GM13976 (cell line): ENCODE measurements at regions of chr2 and their contacts with region 1.

Region 1: GRCh38 chr2:238370823-238371372 is 50.6 kb downstream of the TRAF3IP1 start:
- DNase-seq: peak; percentile 71
- CTCF ChIP-seq: peak; percentile 73

Region 2: DNA sequence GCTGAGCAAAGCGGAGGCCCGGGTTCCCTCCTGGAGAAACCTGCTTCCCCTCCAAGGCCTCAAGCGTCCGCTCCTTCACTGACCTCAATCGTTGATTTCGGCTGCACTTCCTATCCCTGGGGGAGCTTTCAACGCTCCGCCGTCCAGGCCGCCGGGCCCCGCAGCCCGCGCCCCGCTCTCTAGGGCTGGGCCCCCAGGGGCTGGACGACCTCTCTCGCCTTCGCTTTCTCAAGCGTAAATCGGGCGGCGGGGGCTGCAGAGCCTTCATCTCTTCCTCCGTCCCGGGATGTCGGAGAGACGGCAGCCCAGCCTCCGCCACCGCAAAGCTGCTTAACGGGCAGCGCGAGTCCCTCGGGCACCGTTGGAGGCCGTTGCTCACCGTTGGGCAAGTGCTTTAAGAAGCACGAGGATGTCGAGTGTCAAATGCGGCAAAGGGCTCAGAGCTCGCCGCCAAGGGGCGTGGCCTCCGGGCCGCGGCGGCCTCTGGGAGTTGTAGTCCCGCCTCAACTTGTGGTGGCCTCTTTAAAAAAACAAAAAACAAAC is 139.6 kb before region 1 on chr2:
- in situ Hi-C with region 1: no loop called
- DNase-seq: peak; percentile 84
- CTCF ChIP-seq: no peak

Region 3: DNA sequence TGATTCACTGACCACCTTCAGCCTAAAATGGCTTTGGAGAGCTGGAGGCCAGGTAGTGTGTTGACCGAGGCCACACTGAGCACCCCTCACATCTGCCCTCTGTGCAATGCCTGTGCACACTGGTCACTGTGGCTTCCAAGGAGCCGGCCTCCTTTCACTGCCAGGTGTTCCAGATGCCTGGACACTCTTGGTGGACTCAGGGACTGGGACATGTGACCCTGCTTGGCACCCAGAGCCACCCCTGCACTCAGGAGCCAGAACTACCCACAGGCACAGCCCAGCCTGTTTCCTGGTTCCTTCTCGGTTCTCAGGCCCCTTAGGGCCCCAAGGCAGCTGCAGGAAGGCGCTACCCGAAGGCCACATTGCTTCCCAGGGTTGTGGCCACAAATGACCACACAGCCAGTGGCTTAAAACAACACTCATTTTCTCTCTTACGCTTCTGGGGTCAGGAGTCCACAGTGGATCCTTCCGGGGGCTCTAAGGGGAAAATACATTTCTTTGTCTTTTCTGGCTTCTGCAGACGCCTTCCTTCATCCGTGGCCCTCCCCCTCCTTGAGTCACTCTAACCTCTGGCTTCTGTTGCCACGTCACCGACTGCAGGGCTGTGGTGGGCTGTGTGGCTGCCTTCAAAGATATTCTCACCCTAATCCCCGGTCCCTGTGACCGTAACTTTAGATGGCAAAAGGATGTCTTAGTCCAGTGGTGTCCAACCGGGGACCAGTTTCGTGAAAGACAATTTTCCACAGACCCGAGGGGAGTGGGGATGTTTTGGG is 134.4 kb after region 1 on chr2:
- in situ Hi-C with region 1: no loop called
- DNase-seq: no peak
- CTCF ChIP-seq: no peak

Region 4: DNA sequence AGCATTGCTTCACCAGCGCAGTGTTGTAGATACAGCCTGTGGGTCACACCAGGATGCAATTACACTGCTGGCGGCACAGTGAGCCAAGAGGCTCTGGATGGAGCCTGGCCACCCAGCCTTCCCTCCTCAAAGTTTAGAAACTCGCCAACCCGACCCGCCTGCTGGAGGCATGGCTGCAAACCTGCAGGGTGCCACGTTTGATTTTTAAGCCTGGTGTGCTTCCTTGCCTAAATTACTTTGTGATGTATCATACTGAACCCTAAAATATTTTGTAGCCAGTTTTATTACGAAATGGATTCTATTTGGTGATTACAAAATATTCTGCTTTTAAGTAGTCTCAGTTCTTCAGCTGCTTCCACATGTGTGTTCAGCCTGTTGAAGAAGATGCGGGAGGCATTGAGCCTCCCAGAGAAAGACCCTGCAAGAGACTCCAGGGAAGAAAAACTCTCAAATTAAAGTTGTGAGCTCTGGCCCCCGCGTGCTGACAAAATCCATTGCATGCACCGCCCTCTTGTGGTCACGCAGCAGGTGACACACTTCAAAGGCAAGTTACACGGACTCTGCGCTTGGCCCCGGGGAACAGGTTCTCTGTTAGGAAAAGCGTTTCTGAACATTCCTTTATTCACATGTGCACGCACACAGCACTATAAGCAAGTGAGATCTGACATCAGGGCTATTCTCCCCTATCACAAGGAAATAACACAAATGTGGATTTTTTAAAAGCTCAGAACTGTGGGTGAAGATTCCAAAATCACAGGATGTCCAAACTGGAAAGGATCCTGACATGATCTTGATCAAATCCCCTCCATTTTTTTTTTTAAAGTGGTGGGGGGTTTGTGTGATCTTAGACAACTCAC is 414.0 kb after region 1 on chr2:
- in situ Hi-C with region 1: loop called (anchors 25 kb)
- DNase-seq: peak; percentile 78
- CTCF ChIP-seq: peak; percentile 81